ENCODE measurements at regions of chr5 and their contacts with region 1.

Region 1: DNA sequence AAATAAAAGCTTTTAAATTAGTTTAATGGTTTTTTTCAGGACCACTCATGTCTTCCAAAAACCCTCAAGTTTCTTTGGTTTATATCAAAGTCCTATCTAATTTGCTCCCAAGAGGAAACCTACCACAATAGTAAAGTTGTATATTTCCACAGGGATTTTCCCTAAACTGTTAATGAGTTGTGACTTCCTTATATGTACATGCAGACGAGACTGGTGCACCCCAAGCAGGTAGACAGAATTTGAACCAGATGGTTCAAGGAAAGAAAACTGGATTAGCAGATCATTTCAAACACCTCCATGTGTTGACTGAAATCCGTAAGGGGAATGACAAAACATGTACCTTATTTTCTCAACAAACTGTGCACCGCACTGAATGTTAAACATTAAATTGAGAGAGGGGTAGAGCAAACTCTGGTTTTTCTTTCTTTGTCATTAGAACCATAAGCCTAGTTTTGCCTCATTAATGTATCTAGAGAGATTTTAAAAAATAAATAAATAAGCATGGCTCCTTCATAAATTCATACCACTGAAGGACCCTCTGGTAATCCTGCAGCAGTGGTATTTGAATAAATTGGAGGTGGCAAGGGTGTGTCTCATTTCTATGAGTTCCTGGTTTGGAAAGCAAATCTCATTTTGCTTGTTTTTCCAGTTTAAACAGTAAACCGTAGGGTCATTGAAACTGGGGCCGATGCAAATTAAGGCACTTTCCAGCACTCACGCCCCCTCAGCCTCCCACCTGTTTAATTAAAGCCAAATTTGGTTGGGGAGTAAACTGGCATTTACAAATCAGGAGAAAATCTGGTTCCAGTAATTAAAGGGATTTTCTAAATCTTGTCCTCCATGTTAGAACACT is 51.1 kb downstream of the ENC1 start:
- DNase-seq: no peak
- ATAC-seq: no peak
- H3K4me3 ChIP-seq: no peak overlapping the region
- H3K27ac ChIP-seq: peak overlapping the region; percentile 38
- H3K4me1 ChIP-seq: peaks cover 81% of the 10 kb centered on the region
- H3K27me3 ChIP-seq: no peaks in the 10 kb centered on the region
- CTCF ChIP-seq: no peak
- EP300 ChIP-seq: no peak
- POLR2A ChIP-seq: no peak
- RAD21 ChIP-seq: no peak

Region 2: GRCh38 chr5:74625742-74626241 is 36.4 kb after region 1 on chr5:
- CTCF ChIA-PET with region 1: no interaction called
- POLR2A ChIA-PET with region 1: no interaction called
- in situ Hi-C with region 1: no loop called
- intact Hi-C with region 1: loop called (anchors 5 kb)
- DNase-seq: no peak
- ATAC-seq: peak; percentile 82
- H3K4me3 ChIP-seq: no peak overlapping the region
- H3K27ac ChIP-seq: no peak overlapping the region
- H3K4me1 ChIP-seq: peaks cover 53% of the 10 kb centered on the region
- H3K27me3 ChIP-seq: no peaks in the 10 kb centered on the region
- CTCF ChIP-seq: peak; percentile 56
- EP300 ChIP-seq: no peak
- POLR2A ChIP-seq: no peak; a peak in 1 of 4 replicates
- RAD21 ChIP-seq: no peak

Measured in HepG2 (cell line).